Caco-2 (cell line): ENCODE measurements at regions of chr19 and their contacts with region 1.

Region 1: DNA sequence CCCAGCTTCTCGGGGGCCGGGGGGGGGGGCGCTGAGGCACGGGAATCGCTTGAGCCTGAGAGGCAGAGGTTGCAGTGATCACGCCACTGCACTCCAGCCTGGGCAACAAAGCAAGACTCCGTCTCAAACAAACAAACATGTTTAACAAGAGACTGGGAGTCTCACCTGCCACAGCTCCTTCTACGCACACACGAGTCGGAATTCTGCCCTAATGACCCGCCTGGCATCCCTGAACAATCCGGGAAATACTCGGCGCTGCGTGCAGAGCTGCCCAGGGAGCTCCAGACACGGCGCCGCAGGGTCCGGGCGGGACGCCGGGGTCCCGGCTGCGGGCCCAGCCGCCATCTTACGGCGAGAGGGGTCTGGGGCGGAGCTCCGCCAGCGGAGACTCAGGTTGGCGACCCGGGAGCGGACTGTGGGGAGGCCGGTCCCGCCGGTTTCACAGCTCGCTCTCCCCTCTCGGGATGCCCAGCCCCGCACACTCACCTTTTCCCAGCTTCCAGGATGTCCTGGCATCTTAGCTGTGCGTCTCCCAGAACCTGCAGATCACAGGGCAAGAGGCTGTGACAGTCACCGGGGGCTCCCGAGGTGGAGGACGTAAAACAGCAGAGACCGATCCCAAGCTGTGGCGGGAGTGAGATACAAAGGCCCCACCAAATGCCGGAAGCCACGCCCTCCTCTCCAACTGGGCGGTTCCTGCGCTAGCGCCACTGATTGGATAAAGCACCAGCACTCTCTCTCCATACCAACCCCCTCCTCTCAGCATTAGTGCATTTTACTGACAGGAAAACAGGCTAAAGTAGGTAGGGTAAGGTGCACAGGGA is 23.6 kb upstream of the ZNF724 start:
- DNase-seq: peak; percentile 88 to 91
- H3K4me3 ChIP-seq: peak overlapping the region; percentile 70
- H3K4me3 Mint-ChIP-seq: peak overlapping the region; percentile 87
- H3K27ac Mint-ChIP-seq: peak overlapping the region; percentile 76
- H3K4me1 ChIP-seq: peaks cover 15% of the 10 kb centered on the region
- H3K4me1 Mint-ChIP-seq: peaks cover 6% of the 10 kb centered on the region
- H3K27me3 ChIP-seq: no peaks in the 10 kb centered on the region
- H3K27me3 Mint-ChIP-seq: no peaks in the 10 kb centered on the region
- CTCF ChIP-seq: no peak

Region 2: DNA sequence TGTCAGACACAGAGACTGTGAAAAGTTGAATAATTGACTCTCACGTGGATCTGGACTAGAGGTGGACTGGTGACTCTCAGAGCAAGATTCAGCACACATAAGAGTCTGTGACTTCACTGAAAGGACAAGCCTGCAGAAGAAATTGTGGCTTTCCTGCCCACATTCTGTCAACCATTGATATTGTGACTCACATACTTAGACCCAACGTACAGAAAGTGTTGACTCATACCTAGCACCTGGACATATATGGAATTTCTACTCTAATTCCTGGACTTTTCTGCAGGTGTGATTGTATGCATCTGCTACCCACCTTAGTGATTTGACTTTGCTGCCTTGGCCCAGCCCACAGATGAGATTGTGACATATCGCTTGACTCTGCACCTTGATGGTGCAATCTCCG is 172.6 kb before region 1 on chr19:
- CTCF ChIA-PET with region 1: no interaction called
- POLR2A ChIA-PET with region 1: no interaction called
- intact Hi-C with region 1: no loop called
- DNase-seq: no peak
- H3K4me3 ChIP-seq: no peak overlapping the region
- H3K4me3 Mint-ChIP-seq: no peak overlapping the region
- H3K27ac Mint-ChIP-seq: no peak overlapping the region
- H3K4me1 ChIP-seq: no peaks in the 10 kb centered on the region
- H3K4me1 Mint-ChIP-seq: no peaks in the 10 kb centered on the region
- H3K27me3 ChIP-seq: no peaks in the 10 kb centered on the region
- H3K27me3 Mint-ChIP-seq: no peaks in the 10 kb centered on the region
- CTCF ChIP-seq: no peak

Region 3: DNA sequence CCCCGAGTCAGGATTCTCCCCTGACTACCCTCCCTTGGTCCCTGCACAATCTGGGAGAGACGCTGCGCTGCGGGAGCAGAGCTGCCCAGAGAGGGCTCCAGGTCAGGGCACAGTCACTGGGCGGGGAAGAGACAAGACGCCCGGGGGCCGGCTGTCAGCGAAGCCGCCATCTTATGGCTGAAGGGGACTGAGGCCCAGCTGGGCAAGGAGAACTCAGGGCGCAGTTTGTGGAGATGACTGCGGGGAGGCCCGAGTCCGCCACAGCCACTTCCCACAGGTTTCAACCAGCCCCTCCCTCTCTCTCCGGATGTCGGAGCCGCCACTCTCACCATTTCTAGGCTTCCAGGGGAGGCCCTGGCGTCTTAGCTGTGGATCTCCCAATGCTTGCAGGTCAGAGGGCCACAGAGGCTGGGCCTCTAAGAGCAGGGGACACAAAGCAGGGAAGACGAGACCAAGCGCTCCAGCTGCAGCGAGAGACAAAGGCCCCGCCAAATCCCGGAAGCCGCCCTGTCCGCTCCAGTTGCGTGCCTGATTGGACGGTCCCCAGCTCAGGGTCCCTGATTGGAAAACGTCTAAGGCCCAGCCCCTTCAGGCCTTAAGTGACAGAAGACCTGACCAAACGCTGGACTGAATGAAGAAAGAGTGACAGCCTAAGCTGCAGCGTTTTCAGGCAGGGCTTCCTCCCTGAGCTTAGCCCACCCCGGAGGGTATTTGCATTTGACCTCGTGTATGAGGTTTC is 23.7 kb before region 1 on chr19 and contains the start of gene ZNF724:
- CTCF ChIA-PET with region 1: no interaction called
- POLR2A ChIA-PET with region 1: interaction called, 11 read pairs
- intact Hi-C with region 1: loop called (anchors 1 kb)
- DNase-seq: peak; percentile 93 to 96
- H3K4me3 ChIP-seq: peak within 1 kb of the TSS; percentile 65
- H3K4me3 Mint-ChIP-seq: peak within 1 kb of the TSS; percentile 94
- H3K27ac Mint-ChIP-seq: peak within 1 kb of the TSS; percentile 96
- H3K4me1 ChIP-seq: no peaks in the 10 kb centered on the region
- H3K4me1 Mint-ChIP-seq: no peaks in the 10 kb centered on the region
- H3K27me3 ChIP-seq: no peaks in the 10 kb centered on the region
- H3K27me3 Mint-ChIP-seq: no peaks in the 10 kb centered on the region
- CTCF ChIP-seq: no peak
- total RNA-seq, gene ZNF724: 10.6 and 11.8 TPM in 2 replicates

Region 4: GRCh38 chr19:23321948-23322549 is 48.2 kb after region 1 on chr19:
- CTCF ChIA-PET with region 1: no interaction called
- POLR2A ChIA-PET with region 1: no interaction called
- intact Hi-C with region 1: no loop called
- DNase-seq: no peak
- H3K4me3 ChIP-seq: no peak overlapping the region
- H3K4me3 Mint-ChIP-seq: no peak overlapping the region
- H3K27ac Mint-ChIP-seq: no peak overlapping the region
- H3K4me1 ChIP-seq: no peaks in the 10 kb centered on the region
- H3K4me1 Mint-ChIP-seq: no peaks in the 10 kb centered on the region
- H3K27me3 ChIP-seq: no peaks in the 10 kb centered on the region
- H3K27me3 Mint-ChIP-seq: no peaks in the 10 kb centered on the region
- CTCF ChIP-seq: no peak

Region 5: GRCh38 chr19:23395041-23395721 is 121.4 kb after region 1 on chr19 and contains the start of gene ZNF91:
- CTCF ChIA-PET with region 1: no interaction called
- POLR2A ChIA-PET with region 1: no interaction called
- intact Hi-C with region 1: loop called (anchors 10 kb)
- DNase-seq: peak; percentile 91 to 96
- H3K4me3 ChIP-seq: peak within 1 kb of the TSS; percentile 93
- H3K4me3 Mint-ChIP-seq: peak within 1 kb of the TSS; percentile 87
- H3K27ac Mint-ChIP-seq: peak within 1 kb of the TSS; percentile 96
- H3K4me1 ChIP-seq: peaks cover 32% of the 10 kb centered on the region
- H3K4me1 Mint-ChIP-seq: peaks cover 11% of the 10 kb centered on the region
- H3K27me3 ChIP-seq: no peaks in the 10 kb centered on the region
- H3K27me3 Mint-ChIP-seq: no peaks in the 10 kb centered on the region
- CTCF ChIP-seq: no peak
- total RNA-seq, gene ZNF91: 22.6 and 23.7 TPM in 2 replicates